ENCODE measurements at regions of chr16 and their contacts with region 1.

Region 1: GRCh38 chr16:68244903-68245853 is at the start of gene PLA2G15:
- DNase-seq: peak; percentile 98 to 99
- ATAC-seq: peak; percentile 91 to 96 (median 93)
- H3K4me3 ChIP-seq: peak within 1 kb of the TSS; percentile 85
- H3K27ac ChIP-seq: peak within 1 kb of the TSS; percentile 92
- H3K4me1 ChIP-seq: peaks cover 48% of the 10 kb centered on the region
- H3K27me3 ChIP-seq: no peaks in the 10 kb centered on the region
- CTCF ChIP-seq: no peak
- total RNA-seq, gene PLA2G15: 28.0 to 65.0 (median 31.0) TPM

Region 2: GRCh38 chr16:67833418-67834241 is 411.5 kb before region 1 on chr16:
- intact Hi-C with region 1: no loop called
- DNase-seq: peak; percentile 95 to 97
- ATAC-seq: peak; percentile 96 to 100 (median 98)
- H3K4me3 ChIP-seq: peak overlapping the region; percentile 80
- H3K27ac ChIP-seq: peak overlapping the region; percentile 80
- H3K4me1 ChIP-seq: peaks cover 17% of the 10 kb centered on the region
- H3K27me3 ChIP-seq: no peaks in the 10 kb centered on the region
- CTCF ChIP-seq: no peak

Region 3: DNA sequence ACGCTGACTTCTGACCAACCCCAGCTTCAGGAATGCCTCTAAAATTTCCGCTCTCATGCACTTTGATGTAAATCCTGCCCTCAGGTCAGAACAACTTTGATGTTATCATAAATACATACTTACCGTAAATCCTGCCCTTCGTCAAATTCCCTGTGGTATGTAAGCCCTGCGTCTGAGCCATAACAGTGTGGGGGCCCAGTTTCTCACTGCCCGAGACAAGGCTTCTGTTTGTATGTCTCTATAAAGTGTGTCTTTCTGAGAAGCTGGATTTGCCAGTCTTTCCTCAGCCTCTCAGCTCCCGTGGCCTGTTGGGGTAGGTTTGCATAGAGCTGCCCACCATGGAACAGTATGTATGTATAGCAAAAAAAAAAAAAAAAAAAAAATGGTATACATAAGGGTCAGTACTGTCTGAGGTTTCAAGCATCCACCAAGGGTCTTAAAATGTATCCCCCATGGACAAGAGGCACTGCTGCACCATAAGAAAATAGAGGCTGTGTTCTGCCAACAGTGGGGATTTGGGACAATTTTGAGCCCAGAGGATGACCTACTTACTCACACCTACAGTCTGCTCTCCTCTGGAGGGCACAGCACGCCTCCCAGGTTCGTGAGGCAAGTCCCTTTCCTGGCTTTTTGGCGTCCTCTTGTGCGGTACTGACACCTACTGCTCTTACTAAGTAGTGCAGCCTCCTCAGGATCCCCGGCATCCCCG is 83.1 kb after region 1 on chr16:
- intact Hi-C with region 1: loop called (anchors 1 to 2 kb)
- DNase-seq: peak; percentile 71 to 87
- ATAC-seq: peak; percentile 95 to 97 (median 96)
- H3K4me3 ChIP-seq: no peak overlapping the region
- H3K27ac ChIP-seq: no peak overlapping the region
- H3K4me1 ChIP-seq: peaks cover 12% of the 10 kb centered on the region
- H3K27me3 ChIP-seq: no peaks in the 10 kb centered on the region
- CTCF ChIP-seq: peak; percentile 96

Region 4: DNA sequence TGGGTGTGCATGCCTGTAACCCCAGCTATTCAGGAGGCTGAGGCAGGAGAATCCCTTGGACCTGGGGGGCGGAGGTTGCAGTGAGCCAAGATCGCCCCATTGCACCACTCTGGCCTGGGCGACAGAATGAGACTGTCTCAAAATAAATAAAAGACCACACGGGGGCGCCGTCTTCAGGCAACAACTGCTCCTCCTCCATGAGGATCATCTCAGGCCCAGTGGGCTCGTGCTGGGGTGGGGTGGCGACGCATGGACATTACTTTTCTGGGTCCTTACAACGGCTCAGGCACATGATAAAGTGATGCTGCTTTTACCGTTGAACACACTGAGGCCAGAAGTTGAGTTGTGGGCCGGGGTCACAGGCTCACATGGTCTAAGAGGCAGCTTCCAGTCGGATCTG is 121.9 kb after region 1 on chr16:
- intact Hi-C with region 1: no loop called
- DNase-seq: no peak
- ATAC-seq: peak in 3 of 4 donors; percentile 28 to 52 (median 52)
- H3K4me3 ChIP-seq: no peak overlapping the region
- H3K27ac ChIP-seq: no peak overlapping the region
- H3K4me1 ChIP-seq: no peaks in the 10 kb centered on the region
- H3K27me3 ChIP-seq: no peaks in the 10 kb centered on the region
- CTCF ChIP-seq: peak; percentile 28